GM13977 (cell line): ENCODE measurements at regions of chr6 and their contacts with region 1.

Region 1: DNA sequence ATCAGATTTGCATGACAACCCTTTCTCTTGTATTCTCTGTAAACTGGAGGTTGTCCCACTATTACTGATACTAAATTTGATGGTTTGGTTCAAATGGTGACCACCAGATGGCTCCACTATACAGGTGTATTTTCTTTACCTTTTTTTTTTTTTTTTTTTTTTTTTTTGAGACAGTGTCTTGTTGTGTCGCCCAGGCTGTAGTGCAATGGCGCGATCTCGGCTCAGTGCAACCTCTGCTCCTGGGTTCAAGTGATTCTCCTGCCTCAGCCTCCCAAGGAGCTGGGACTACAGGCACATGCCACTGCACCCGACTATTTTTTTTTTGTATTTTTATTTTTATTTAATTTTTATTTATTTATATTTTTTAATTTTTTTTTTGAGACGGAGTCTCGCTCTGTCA is 6.6 kb upstream of the WTAP start:
- DNase-seq: peak; percentile 54
- CTCF ChIP-seq: peak; percentile 44

Region 2: DNA sequence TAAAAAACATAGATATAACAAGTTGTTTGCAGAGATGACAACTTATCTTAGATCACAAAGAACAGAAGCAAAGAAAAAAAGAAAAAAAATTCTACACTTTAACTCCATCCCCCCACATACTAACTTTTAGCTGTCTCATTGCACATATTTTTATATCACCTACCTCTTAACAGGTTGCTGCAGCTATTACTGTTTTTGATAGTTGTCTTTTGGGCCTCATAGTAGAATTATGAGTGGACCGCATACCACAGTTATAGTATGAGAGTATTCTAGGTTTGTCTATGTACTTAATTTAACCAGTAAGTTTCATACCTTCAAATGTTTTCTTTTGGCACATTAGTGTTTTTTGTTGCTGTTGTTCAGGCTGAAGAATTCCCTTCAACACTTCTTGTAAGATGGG is 733.1 kb before region 1 on chr6:
- in situ Hi-C with region 1: no loop called
- DNase-seq: no peak
- CTCF ChIP-seq: no peak

Region 3: DNA sequence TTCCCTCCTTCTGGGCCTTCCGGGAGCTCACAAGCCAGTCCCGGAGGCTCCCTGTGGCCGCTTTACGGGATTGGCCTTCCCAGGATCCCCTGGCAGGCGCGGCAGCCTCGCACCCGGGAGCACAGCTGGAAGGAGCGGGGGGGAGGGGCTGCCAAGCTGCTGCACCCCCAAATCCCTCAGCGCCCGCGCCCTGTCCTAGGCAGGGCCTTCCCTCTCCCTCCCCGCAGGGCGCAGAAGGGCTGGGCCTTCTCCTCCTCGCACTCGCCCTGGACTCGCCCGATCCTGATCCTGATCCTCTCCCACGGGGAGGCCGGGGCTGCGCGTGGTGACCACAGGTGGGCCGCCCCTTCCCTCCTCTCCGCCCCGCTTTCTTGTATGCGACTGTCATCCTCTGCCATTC is 405.1 kb before region 1 on chr6:
- in situ Hi-C with region 1: no loop called
- DNase-seq: no peak
- CTCF ChIP-seq: no peak

Region 4: DNA sequence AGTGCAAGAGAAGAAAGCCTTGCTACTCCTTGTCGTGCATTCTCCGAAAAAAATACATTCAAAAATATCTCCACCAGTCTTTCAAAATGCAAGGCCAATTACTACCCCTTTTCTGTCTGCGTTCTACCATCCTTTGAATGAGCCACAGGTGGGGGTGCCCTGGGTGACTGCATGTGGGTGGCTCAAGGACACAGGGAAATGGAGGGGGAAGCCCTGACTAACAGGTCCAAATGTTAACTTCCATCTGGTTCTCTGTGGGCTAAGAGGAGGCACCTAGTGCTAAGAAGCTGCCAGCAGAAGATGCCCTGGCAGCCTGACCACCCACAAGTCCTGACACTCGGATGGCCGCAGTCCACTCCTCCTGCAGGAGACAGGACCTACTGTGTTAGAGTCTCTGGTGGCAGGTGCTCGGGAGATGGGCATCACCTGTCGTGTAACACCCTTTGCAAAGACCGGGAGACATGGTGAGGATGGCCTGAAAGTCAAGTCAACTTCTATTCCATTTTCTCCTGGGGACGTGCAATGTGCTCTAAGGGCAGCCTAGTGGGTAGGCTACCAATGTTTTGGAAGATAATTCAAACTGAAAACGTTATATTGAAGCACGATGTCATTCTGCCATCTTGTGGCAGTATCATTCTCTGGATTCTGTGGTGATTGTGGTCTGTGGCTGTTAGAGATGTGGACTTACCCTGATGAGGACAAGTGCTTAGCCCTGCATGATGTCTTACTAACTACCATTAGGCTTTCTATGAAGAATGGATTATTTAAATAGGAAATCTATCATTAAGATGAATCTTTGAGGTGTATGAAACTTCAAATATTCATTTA is 220.8 kb after region 1 on chr6:
- in situ Hi-C with region 1: loop called (anchors 25 kb)
- DNase-seq: peak; percentile 45
- CTCF ChIP-seq: peak; percentile 57